Pancreas (tissue), 10 donors: ENCODE measurements at regions of chr18 and their contacts with region 1.

Region 1: DNA sequence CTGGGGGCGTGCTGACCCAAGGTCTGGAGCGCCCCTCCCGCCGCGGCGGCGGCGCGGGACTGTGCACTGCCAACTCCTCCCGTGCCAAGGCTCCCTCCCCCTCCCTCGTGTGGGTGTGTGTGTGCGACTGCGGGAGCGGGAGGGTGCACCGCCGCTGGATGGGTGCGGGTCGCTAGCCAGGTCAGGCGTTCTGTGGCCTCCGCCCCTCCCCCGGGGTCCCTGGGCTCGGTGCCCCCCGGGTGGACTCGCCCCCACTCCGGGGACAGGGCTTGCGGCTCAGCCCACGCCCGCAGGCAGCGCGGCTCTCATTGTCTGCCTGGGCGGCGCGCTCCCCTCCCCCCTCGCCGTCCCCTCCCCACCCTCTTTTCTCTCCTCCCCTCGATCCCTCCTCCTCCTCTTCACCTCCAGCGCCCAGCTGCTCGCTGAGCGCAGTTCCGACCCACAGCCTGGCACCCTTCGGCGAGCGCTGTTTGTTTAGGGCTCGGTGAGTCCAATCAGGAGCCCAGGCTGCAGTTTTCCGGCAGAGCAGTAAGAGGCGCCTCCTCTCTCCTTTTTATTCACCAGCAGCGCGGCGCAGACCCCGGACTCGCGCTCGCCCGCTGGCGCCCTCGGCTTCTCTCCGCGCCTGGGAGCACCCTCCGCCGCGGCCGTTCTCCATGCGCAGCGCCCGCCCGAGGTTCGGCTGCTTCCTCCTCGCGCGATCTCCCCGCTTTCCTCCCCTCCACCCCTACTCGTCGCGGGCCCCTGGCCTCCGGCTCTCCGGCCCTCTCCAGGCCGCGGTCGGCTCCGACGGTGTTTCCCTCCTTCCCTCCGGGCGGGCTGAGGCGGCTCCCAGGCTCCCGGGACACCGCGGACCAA is at the start of gene GATA6:
- DNase-seq: peak; percentile 92 to 98 (median 97)
- ATAC-seq: peak; percentile 61 to 74 (median 70)
- H3K4me3 ChIP-seq: peak within 1 kb of the TSS; percentile 69 to 90 (median 80)
- H3K27ac ChIP-seq: peak within 1 kb of the TSS; percentile 87 to 99 (median 96)
- H3K4me1 ChIP-seq: no peaks in the 10 kb centered on the region
- H3K27me3 ChIP-seq: no peaks in the 10 kb centered on the region
- CTCF ChIP-seq: peak in 1 of 4 donors; percentile 6
- total RNA-seq, gene GATA6: 18.8 to 36.4 (median 24.9) TPM

Region 2: DNA sequence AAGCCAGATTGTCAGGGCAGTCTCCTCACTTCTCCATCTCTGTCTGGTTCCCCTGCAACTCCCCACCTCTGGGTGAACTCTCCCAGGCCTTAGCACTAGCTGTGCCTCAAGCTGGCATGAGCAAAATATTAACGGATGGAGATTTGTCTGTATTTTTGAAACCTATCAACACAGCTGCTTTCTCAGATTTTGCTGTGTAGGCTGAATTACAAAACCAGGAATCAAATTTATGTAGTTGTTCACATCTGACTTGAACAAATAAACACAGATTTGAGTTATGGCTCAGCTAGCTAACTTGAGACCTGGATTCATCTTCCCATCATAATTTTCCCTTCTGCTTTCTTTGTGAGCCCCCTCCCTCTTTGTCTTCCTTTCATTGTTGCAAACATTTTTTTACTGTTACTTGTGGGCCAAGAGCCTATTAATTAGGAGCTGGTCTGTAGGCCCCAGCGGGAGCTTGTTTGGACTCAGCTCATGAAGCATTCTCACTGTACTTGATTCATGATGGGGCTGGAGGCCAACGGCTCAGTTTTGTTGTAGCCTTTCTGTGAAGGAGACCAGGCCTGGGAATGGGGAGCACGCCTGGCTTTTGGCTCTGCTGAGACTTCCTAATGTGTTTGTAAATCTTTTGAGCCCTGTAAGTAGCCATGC is 163.9 kb before region 1 on chr18:
- intact Hi-C with region 1: loop called in 1 of 3 experiments (anchors 10 kb)
- DNase-seq: no peak
- ATAC-seq: peak in 3 of 4 donors; percentile 10 to 26 (median 20)
- H3K4me3 ChIP-seq: no peak overlapping the region
- H3K27ac ChIP-seq: peak overlapping the region in 2 of 4 donors; percentile 55 to 60
- H3K4me1 ChIP-seq: peaks cover 6 to 15% (median 8%) of the 10 kb centered on the region in 3 donors
- H3K27me3 ChIP-seq: no peaks in the 10 kb centered on the region
- CTCF ChIP-seq: no peak

Region 3: GRCh38 chr18:22020127-22020866 is 148.9 kb before region 1 on chr18:
- intact Hi-C with region 1: loop called in 2 of 3 experiments (anchors 5 to 10 kb)
- DNase-seq: peak in 4 of 6 donors; percentile 32 to 71 (median 46)
- ATAC-seq: peak; percentile 57 to 78 (median 76)
- H3K4me3 ChIP-seq: no peak overlapping the region
- H3K27ac ChIP-seq: peak overlapping the region; percentile 42 to 82 (median 69)
- H3K4me1 ChIP-seq: peaks cover 24 to 43% (median 40%) of the 10 kb centered on the region in 3 donors
- H3K27me3 ChIP-seq: no peaks in the 10 kb centered on the region
- CTCF ChIP-seq: no peak

Region 4: DNA sequence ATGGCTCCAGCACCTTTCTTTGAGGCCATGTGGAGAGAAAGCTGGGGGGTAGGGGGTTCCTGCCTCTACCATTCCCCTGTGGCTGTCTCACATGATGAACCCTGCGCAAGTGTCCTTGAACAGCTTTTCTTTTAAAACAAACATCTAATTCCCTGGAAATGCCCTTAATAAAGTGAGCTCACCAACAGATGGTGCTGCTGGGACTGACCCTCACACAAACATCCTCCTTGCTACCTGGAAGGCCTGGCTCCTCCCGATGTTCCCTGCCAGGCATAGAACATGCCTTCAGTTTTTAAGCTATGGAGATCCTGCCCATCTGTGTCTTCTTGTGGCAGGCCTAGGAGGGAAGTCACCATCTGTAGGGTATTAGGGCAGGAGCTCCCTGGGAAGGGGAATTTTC is 60.6 kb before region 1 on chr18:
- intact Hi-C with region 1: loop called in 1 of 3 experiments (anchors 10 kb)
- DNase-seq: peak in 2 of 6 donors; percentile 22 to 24
- ATAC-seq: peak in 3 of 4 donors; percentile 54 to 71 (median 59)
- H3K4me3 ChIP-seq: no peak overlapping the region
- H3K27ac ChIP-seq: no peak overlapping the region
- H3K4me1 ChIP-seq: peaks cover 0 to 8% (median 0%) of the 10 kb centered on the region in 3 donors
- H3K27me3 ChIP-seq: no peaks in the 10 kb centered on the region
- CTCF ChIP-seq: peak in 1 of 4 donors; percentile 11

Region 5: GRCh38 chr18:22348521-22349316 is 179.5 kb after region 1 on chr18:
- intact Hi-C with region 1: loop called in 1 of 3 experiments (anchors 10 kb)
- DNase-seq: peak; percentile 46 to 75 (median 70)
- ATAC-seq: peak; percentile 57 to 73 (median 70)
- H3K4me3 ChIP-seq: peak overlapping the region; percentile 26 to 46 (median 32)
- H3K27ac ChIP-seq: peak overlapping the region; percentile 54 to 71 (median 62)
- H3K4me1 ChIP-seq: peaks cover 7 to 19% (median 9%) of the 10 kb centered on the region in 3 donors
- H3K27me3 ChIP-seq: no peaks in the 10 kb centered on the region
- CTCF ChIP-seq: no peak

Region 6: GRCh38 chr18:22563098-22563707 is 394.0 kb after region 1 on chr18:
- intact Hi-C with region 1: loop called in 2 of 3 experiments (anchors 10 kb)
- DNase-seq: peak in 3 of 6 donors; percentile 22 to 52 (median 33)
- ATAC-seq: peak; percentile 71 to 81 (median 78)
- H3K4me3 ChIP-seq: no peak overlapping the region
- H3K27ac ChIP-seq: no peak overlapping the region
- H3K4me1 ChIP-seq: peaks cover 0 to 4% (median 3%) of the 10 kb centered on the region in 3 donors
- H3K27me3 ChIP-seq: no peaks in the 10 kb centered on the region
- CTCF ChIP-seq: peak; percentile 36 to 62 (median 45)